ENCODE measurements at regions of chr4 and their contacts with region 1.

Region 1: GRCh38 chr4:90127706-90128345 is 632 bp downstream of the CCSER1 start:
- DNase-seq: no peak
- H3K4me3 ChIP-seq: peak overlapping the region; percentile 56
- CTCF ChIP-seq: no peak
- POLR2A ChIP-seq: no peak

Region 2: DNA sequence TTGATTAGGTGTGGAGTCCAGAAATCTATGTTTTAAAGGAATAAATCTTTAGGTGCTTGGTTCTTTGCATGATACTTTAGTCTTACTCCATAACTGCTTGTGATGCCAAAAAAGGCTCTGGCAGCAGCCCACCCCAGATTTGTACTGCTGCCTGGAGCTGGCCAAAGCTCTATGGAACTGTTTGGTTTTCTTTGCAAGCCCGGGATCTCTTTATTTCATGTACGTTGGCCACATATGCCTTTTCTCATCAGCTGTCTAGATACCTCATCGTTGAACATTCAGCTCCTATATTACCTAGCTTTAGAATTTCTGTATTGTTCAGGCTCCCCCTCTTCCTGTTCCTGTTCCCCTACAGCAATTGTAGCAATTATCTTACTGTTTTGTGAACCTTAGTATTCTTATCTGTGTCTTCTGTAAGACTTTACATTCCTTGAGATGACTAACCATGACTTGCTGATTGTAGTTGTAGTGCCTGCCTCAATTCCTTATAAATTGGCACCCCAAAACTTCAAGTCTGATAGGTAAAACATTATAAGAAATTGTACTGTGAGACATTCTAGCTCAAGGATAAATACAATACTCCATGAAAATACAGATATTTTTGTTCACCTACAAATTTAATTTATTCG is 620.8 kb before region 1 on chr4:
- intact Hi-C with region 1: no loop called
- DNase-seq: no peak
- H3K4me3 ChIP-seq: no peak overlapping the region
- CTCF ChIP-seq: no peak
- POLR2A ChIP-seq: no peak

Region 3: GRCh38 chr4:90112724-90113123 is 15.1 kb before region 1 on chr4:
- intact Hi-C with region 1: loop called (anchors 1 kb)
- DNase-seq: no peak
- H3K4me3 ChIP-seq: no peak overlapping the region
- CTCF ChIP-seq: no peak
- POLR2A ChIP-seq: no peak

Measured in lower leg skin (tissue), 4 donors.